CD4-positive, alpha-beta T cell (primary cell): ENCODE measurements at regions of chr19 and their contacts with region 1.

Region 1: DNA sequence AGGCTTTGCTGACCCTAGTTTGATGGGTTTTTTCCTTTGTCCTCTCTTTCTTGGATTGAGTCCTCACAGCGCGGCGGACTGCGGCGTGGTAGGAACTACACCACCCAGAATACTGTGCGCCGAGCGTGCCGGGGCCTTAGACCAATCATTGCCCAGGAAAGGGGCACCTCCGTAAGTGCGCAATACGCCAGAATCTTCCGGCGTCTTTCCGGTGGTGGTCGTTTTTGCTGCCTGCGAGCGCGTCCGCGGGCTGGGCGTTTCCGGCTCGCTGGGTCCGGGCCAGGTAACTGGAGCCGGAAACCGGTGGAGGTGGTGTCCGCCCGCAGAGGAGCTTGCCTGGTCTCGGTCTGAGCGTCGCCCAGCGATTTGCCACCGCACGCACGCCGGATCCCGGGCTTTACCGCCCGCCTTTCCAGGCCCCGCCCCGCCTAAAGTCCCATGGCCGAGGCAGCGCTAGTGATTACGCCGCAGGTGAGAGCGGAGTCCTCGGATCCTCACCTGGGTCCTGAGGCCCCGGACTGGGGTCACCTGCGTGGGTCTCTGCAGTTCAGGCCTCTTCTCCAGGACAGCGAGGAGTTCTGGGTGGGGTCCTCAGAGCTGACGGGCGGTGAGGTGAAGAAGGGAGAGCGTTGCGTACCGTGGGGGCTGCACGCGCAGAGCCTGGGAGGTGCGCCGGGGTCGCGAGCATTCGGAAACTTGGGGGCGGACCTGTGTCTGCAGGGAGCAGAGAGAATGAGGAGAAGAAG is at the start of gene ZNF549:
- DNase-seq: peak; percentile 76 to 96 (median 83)
- ATAC-seq: peak; percentile 97
- H3K4me3 ChIP-seq: peak within 1 kb of the TSS; percentile 96
- H3K4me3 Mint-ChIP-seq: peak within 1 kb of the TSS; percentile 97
- H3K27ac ChIP-seq: peak within 1 kb of the TSS; percentile 77 to 81
- H3K27ac Mint-ChIP-seq: peak within 1 kb of the TSS; percentile 94
- H3K4me1 ChIP-seq: peaks cover 18% of the 10 kb centered on the region
- H3K4me1 Mint-ChIP-seq: peaks cover 23% of the 10 kb centered on the region
- H3K27me3 ChIP-seq: no peaks in the 10 kb centered on the region
- H3K27me3 Mint-ChIP-seq: no peaks in the 10 kb centered on the region
- CTCF ChIP-seq: no peak
- total RNA-seq, gene ZNF549: 10.1 to 11.1 TPM

Region 2: DNA sequence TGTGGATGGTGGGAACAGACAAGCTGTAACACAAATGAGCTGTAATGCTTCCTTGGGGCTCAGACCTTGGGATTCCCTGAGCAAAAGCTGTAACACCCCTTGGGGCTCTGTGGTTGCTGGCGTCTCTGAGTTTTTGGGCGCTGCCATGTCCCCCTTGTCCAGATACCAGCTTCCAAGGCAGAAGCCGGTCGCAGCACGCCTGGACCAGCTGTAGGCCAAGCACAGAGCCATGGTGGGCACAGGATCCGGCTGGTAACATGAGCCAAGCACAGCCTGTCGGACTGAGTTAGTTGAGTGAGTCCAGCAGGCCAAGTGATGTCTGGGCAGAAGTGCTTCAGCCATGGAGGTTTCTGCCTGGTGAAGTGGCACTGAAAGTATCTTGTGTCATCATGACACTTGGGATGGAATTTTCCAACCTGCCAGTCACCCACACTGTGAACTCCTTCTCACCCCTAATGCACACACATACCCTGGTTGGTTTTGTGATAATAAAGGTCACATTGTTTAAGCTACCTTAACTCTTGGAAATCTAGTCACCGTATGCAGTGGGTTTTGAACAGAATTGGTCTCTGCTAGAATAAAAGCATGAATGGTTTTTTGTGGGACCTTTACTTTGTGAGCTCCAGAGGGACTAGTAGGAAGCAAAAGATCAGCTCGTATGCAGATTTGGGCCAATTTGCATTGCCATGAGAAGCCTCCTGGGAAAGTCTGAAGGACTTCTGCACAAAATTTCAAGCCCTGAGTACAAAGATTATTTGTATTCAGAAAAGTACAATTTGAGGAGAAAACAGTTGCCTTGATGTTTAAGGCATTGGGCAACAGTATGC is 123.4 kb before region 1 on chr19:
- CTCF ChIA-PET with region 1: no interaction called
- POLR2A ChIA-PET with region 1: no interaction called
- intact Hi-C with region 1: no loop called
- DNase-seq: no peak
- ATAC-seq: no peak
- H3K4me3 ChIP-seq: no peak overlapping the region
- H3K4me3 Mint-ChIP-seq: no peak overlapping the region
- H3K27ac ChIP-seq: no peak overlapping the region
- H3K27ac Mint-ChIP-seq: no peak overlapping the region
- H3K4me1 ChIP-seq: peaks cover 3% of the 10 kb centered on the region
- H3K4me1 Mint-ChIP-seq: peaks cover 7% of the 10 kb centered on the region
- H3K27me3 ChIP-seq: no peaks in the 10 kb centered on the region
- H3K27me3 Mint-ChIP-seq: no peaks in the 10 kb centered on the region
- CTCF ChIP-seq: no peak

Region 3: DNA sequence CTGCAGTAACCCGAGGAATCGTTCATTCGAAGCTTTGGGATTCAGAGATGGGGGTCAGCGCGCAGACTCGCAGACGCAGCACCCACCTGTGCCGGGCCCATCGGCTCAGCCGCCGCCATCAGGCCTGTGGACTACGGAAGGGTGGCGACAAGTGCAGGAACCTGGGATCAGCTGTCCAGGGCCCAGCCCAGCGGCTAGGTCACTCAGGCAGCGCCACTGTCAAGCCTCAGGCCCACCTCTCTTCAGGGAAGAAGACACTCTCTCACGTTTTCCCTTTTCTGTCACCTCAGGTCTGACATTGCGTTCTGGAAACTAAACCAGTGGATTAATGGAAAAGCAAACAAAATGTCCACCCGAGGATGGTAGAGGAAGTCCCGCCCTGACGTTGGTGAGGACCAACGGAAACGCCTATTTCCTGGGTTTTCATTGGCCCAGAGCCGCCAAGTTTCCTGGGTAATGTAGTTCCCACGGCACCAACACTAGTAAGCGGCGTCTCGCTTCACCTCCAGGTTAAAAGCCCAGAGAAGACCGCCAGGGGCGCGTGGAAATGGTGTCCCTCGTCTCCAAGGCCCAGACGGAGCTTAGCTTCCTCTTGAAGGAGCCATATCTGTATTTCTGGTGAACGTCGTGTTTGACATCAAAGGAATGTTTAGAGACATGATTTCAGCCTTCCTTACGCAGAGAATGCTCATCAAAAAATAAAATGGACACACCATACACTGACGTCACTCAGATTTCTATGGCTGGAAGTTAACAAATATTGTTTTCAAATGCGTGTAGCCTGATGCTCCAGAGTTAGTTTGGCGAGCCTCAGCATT is 49.9 kb before region 1 on chr19 and contains the start of gene ZNF772:
- CTCF ChIA-PET with region 1: no interaction called
- POLR2A ChIA-PET with region 1: no interaction called
- intact Hi-C with region 1: loop called in 1 of 2 experiments (anchors 5 kb)
- DNase-seq: peak; percentile 73 to 95 (median 85)
- ATAC-seq: peak; percentile 98
- H3K4me3 ChIP-seq: peak within 1 kb of the TSS; percentile 85
- H3K4me3 Mint-ChIP-seq: peak within 1 kb of the TSS; percentile 90
- H3K27ac ChIP-seq: peak within 1 kb of the TSS; percentile 46 to 54
- H3K27ac Mint-ChIP-seq: peak within 1 kb of the TSS; percentile 77
- H3K4me1 ChIP-seq: peaks cover 16% of the 10 kb centered on the region
- H3K4me1 Mint-ChIP-seq: peaks cover 19% of the 10 kb centered on the region
- H3K27me3 ChIP-seq: no peaks in the 10 kb centered on the region
- H3K27me3 Mint-ChIP-seq: no peaks in the 10 kb centered on the region
- CTCF ChIP-seq: peak; percentile 33
- total RNA-seq, gene ZNF772: 2.5 to 3.2 TPM

Region 4: GRCh38 chr19:57559404-57560025 is 32.2 kb after region 1 on chr19 and contains the start of gene ZNF550:
- CTCF ChIA-PET with region 1: no interaction called
- POLR2A ChIA-PET with region 1: no interaction called
- intact Hi-C with region 1: loop called (anchors 2 kb)
- DNase-seq: peak; percentile 77 to 93 (median 86)
- ATAC-seq: peak; percentile 98
- H3K4me3 ChIP-seq: peak within 1 kb of the TSS; percentile 94
- H3K4me3 Mint-ChIP-seq: peak within 1 kb of the TSS; percentile 95
- H3K27ac ChIP-seq: peak within 1 kb of the TSS; percentile 44 to 45
- H3K27ac Mint-ChIP-seq: peak within 1 kb of the TSS; percentile 64
- H3K4me1 ChIP-seq: peaks cover 25% of the 10 kb centered on the region
- H3K4me1 Mint-ChIP-seq: peaks cover 34% of the 10 kb centered on the region
- H3K27me3 ChIP-seq: peaks cover 0 to 5% of the 10 kb centered on the region in 2 experiments
- H3K27me3 Mint-ChIP-seq: peaks cover 9% of the 10 kb centered on the region
- CTCF ChIP-seq: no peak
- total RNA-seq, gene ZNF550: 15.7 to 20.0 TPM

Region 5: GRCh38 chr19:58372311-58373133 is 845.2 kb after region 1 on chr19:
- CTCF ChIA-PET with region 1: no interaction called
- POLR2A ChIA-PET with region 1: no interaction called
- intact Hi-C with region 1: no loop called
- DNase-seq: no peak
- ATAC-seq: no peak
- H3K4me3 ChIP-seq: no peak overlapping the region
- H3K4me3 Mint-ChIP-seq: no peak overlapping the region
- H3K27ac ChIP-seq: no peak overlapping the region
- H3K27ac Mint-ChIP-seq: no peak overlapping the region
- H3K4me1 ChIP-seq: no peaks in the 10 kb centered on the region
- H3K4me1 Mint-ChIP-seq: no peaks in the 10 kb centered on the region
- H3K27me3 ChIP-seq: no peaks in the 10 kb centered on the region
- H3K27me3 Mint-ChIP-seq: no peaks in the 10 kb centered on the region
- CTCF ChIP-seq: no peak